PC-9 (cell line): ENCODE measurements at regions of chr6 and their contacts with region 1.

Region 1: DNA sequence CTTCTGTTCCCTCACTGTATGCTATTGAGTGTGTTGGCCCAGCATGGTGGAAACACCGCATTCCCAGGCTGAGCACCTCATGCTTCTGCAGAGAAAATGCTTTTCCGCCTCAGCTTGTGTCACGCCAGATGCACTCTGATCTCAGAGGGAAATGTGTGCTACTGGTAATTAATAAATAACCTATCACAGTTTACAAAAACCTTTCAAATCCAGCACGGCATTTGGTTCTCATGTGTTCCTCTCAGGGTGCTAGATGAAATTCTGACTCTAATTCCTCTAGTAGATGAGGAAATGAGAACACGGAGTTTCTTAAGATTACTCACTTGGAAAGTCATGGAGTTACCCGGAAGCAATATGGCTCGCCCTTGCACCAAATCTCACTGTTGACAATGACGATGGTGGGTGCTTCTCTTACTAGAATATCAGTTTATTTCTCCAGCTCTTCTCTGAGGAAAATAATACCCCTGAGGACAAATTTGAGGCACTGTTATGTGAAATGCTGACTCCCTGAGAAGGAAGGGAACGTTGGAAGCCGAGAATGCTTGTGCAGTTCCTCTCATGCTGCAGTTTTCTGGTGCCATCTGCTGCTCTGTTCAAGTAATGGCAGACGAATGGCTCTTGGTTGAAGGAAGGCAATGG is 116.6 kb downstream of the RNF144B start:
- DNase-seq: peak; percentile 61 to 63
- H3K4me3 ChIP-seq: peak overlapping the region; percentile 17; the same call in 1 of the 2 replicates
- H3K27ac ChIP-seq: no peak overlapping the region
- H3K4me1 ChIP-seq: peaks cover 12% of the 10 kb centered on the region; the same call in 1 of the 2 replicates
- H3K27me3 ChIP-seq: no peaks in the 10 kb centered on the region
- CTCF ChIP-seq: peak; percentile 95

Region 2: DNA sequence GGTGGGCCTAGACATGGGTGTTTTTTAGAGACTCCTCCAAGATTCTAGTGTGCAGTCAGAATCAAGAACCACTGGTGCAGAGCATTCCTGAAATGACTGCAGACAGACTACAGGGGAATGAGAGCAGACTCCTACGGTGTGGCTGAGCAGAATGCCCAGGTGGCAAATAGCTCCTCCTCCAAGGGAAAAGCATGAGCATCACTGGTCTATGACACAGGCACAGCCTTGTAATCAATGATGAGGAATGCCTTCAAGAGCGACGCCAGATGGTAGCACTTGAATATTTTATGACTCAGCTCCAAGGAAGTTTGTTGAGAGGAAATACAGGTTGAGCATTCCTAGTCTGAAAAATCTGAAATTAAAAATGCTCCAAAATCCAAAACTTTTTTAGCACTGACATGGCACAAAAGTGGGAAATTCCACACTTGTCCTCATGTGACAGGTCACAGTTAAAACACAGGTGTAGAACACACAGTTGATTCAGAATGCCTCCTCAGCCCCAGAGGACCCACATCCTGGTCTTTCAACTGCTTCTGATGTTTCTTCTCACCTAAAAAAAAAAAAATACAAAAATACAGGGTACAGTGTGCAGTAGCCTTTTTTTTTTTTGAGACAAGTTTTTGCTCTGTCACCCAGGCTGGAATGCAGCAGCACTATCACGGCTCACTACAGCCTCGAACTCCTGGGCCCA is 914.2 kb before region 1 on chr6:
- CTCF ChIA-PET with region 1: no interaction called
- POLR2A ChIA-PET with region 1: no interaction called
- intact Hi-C with region 1: loop called (anchors 5 kb)
- DNase-seq: peak; percentile 73 to 94
- H3K4me3 ChIP-seq: no peak overlapping the region
- H3K27ac ChIP-seq: peak overlapping the region; percentile 24; the same call in 1 of the 2 replicates
- H3K4me1 ChIP-seq: peaks cover 11% of the 10 kb centered on the region
- H3K27me3 ChIP-seq: no peaks in the 10 kb centered on the region
- CTCF ChIP-seq: no peak; the same call in 1 of the 2 replicates

Region 3: GRCh38 chr6:18155150-18155863 is 348.4 kb before region 1 on chr6 and contains the start of gene KDM1B:
- CTCF ChIA-PET with region 1: no interaction called
- POLR2A ChIA-PET with region 1: no interaction called
- intact Hi-C with region 1: loop called (anchors 10 kb)
- DNase-seq: peak; percentile 88 to 99
- H3K4me3 ChIP-seq: peak within 1 kb of the TSS; percentile 95
- H3K27ac ChIP-seq: peak within 1 kb of the TSS; percentile 35
- H3K4me1 ChIP-seq: peaks cover 25% of the 10 kb centered on the region
- H3K27me3 ChIP-seq: no peaks in the 10 kb centered on the region
- CTCF ChIP-seq: no peak
- total RNA-seq, gene KDM1B: 15.6 and 21.5 TPM in 2 replicates

Region 4: GRCh38 chr6:18343741-18344140 is 160.0 kb before region 1 on chr6:
- CTCF ChIA-PET with region 1: no interaction called
- POLR2A ChIA-PET with region 1: no interaction called
- intact Hi-C with region 1: loop called (anchors 5 kb)
- DNase-seq: peak in 1 of 2 experiments; percentile 73
- H3K4me3 ChIP-seq: no peak overlapping the region
- H3K27ac ChIP-seq: peak overlapping the region; percentile 68
- H3K4me1 ChIP-seq: peaks cover 22% of the 10 kb centered on the region
- H3K27me3 ChIP-seq: no peaks in the 10 kb centered on the region
- CTCF ChIP-seq: no peak

Region 5: GRCh38 chr6:18585032-18585573 is 81.4 kb after region 1 on chr6:
- CTCF ChIA-PET with region 1: no interaction called
- POLR2A ChIA-PET with region 1: no interaction called
- intact Hi-C with region 1: no loop called
- DNase-seq: peak in 1 of 2 experiments; percentile 19
- H3K4me3 ChIP-seq: no peak overlapping the region
- H3K27ac ChIP-seq: no peak overlapping the region
- H3K4me1 ChIP-seq: no peaks in the 10 kb centered on the region
- H3K27me3 ChIP-seq: no peaks in the 10 kb centered on the region
- CTCF ChIP-seq: no peak

Region 6: GRCh38 chr6:19408331-19408730 is 904.6 kb after region 1 on chr6:
- CTCF ChIA-PET with region 1: no interaction called
- POLR2A ChIA-PET with region 1: no interaction called
- intact Hi-C with region 1: no loop called
- DNase-seq: no peak
- H3K4me3 ChIP-seq: no peak overlapping the region
- H3K27ac ChIP-seq: no peak overlapping the region
- H3K4me1 ChIP-seq: peaks cover 14% of the 10 kb centered on the region
- H3K27me3 ChIP-seq: no peaks in the 10 kb centered on the region
- CTCF ChIP-seq: no peak